CD4-positive, alpha-beta memory T cell (primary cell): ENCODE measurements at regions of chr11 and their contacts with region 1.

Region 1: DNA sequence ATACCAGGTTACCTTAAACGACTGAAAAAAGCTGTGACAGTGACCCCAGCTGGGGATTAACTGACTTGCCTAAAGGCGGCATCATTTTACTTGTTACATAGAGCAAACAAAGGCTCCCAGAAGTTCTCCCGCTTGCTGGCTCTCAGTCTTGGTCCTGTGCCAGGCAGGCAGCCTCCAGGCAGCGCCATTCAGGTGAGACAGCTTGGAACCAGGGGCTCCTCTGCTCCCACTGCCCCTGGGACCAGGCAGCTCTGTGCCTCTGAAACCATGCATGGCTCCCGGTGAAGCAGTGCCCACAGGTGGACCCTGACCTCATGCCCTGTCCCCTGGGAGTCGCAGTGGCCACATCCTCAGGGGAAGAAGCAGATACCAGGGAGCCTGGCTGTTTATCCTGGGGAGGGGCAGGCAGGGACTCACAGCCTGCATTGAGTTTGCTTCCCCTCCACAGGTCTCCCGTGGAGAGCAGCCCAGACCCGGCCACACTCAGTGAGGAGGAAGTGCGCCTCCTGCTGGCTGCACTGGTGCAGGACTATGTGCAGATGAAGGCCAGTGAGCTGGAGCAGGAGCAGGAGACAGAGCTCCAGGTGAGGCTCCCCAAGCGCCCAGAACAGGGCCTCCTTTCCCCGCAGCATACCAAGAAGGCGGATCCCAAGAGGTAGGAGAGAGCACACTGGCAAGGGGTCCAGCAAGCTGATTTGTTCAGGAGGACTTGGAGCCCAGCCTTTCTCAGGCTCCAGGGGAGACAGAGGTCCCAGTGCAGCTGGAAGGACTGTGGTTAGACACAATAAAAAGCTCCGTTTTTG is 15.6 kb upstream of the CYP2R1 start:
- DNase-seq: peak; percentile 74 to 81 (median 76)
- H3K4me3 ChIP-seq: no peak overlapping the region
- H3K4me3 Mint-ChIP-seq: peak overlapping the region in 4 of 8 donors; percentile 21 to 53 (median 40)
- H3K27ac ChIP-seq: no peak overlapping the region
- H3K27ac Mint-ChIP-seq: peak overlapping the region; percentile 6 to 94 (median 69)
- H3K4me1 ChIP-seq: peaks cover 29% of the 10 kb centered on the region
- H3K4me1 Mint-ChIP-seq: peaks cover 22 to 50% (median 34%) of the 10 kb centered on the region in 4 donors
- H3K27me3 ChIP-seq: no peaks in the 10 kb centered on the region
- H3K27me3 Mint-ChIP-seq: no peaks in the 10 kb centered on the region

Region 2: GRCh38 chr11:13772223-13773046 is 1135.2 kb before region 1 on chr11:
- CTCF ChIA-PET with region 1: interaction called, 18 read pairs
- POLR2A ChIA-PET with region 1: no interaction called
- intact Hi-C with region 1: loop called (anchors 2 kb)
- DNase-seq: peak in 4 of 5 donors; percentile 72 to 78 (median 73)
- H3K4me3 ChIP-seq: no peak overlapping the region
- H3K4me3 Mint-ChIP-seq: no peak overlapping the region
- H3K27ac ChIP-seq: no peak overlapping the region
- H3K27ac Mint-ChIP-seq: no peak overlapping the region
- H3K4me1 ChIP-seq: no peaks in the 10 kb centered on the region
- H3K4me1 Mint-ChIP-seq: peaks cover 2 to 6% (median 5%) of the 10 kb centered on the region in 4 donors
- H3K27me3 ChIP-seq: no peaks in the 10 kb centered on the region
- H3K27me3 Mint-ChIP-seq: peaks cover 4% of the 10 kb centered on the region in 2 donors

Region 3: DNA sequence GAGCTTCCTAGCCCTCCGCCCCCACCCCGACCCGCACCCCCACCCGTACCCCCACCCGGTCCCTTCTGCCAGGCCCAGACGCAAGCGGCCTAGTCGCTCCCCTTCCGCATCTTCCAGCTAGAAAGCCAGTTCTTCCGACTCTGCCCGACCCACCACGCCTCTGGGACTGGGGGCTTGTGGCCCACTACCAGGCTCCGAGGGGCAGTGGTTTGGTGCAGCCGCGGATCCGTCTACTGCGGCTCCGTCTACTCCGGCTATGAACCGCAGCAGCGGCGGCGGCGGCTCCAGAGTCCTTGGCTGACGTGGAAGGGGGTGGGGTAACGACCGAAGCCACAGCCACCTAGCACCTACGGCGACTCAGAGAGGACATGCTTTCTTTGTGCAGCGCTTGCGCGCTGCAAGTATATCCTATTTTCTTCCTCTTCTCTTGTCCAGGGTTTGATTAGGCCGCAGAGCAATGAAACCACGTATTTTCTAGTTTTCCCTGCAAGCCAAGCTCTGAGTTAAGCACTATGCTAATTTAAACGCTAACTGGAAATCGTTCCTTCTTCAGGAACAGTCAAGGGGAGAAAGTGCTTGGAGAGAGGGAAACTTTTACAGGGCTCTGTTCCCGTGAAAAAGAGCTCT is 407.9 kb before region 1 on chr11 and contains the start of gene COPB1:
- CTCF ChIA-PET with region 1: interaction called, 5 read pairs
- POLR2A ChIA-PET with region 1: interaction called, 15 read pairs
- intact Hi-C with region 1: loop called (anchors 1 kb)
- DNase-seq: peak; percentile 91 to 95 (median 92)
- H3K4me3 ChIP-seq: peak within 1 kb of the TSS; percentile 76 to 89
- H3K4me3 Mint-ChIP-seq: peak within 1 kb of the TSS; percentile 92 to 100 (median 94)
- H3K27ac ChIP-seq: peak within 1 kb of the TSS; percentile 65
- H3K27ac Mint-ChIP-seq: peak within 1 kb of the TSS; percentile 82 to 100 (median 98)
- H3K4me1 ChIP-seq: peaks cover 49% of the 10 kb centered on the region
- H3K4me1 Mint-ChIP-seq: peaks cover 28 to 57% (median 35%) of the 10 kb centered on the region in 4 donors
- H3K27me3 ChIP-seq: no peaks in the 10 kb centered on the region
- H3K27me3 Mint-ChIP-seq: no peaks in the 10 kb centered on the region
- total RNA-seq, gene COPB1: 79.8 to 82.1 TPM

Region 4: GRCh38 chr11:14566331-14567063 is 341.1 kb before region 1 on chr11:
- CTCF ChIA-PET with region 1: interaction called, 12 read pairs
- POLR2A ChIA-PET with region 1: no interaction called
- intact Hi-C with region 1: no loop called
- DNase-seq: no peak
- H3K4me3 ChIP-seq: no peak overlapping the region
- H3K4me3 Mint-ChIP-seq: peak overlapping the region in 3 of 8 donors; percentile 5 to 56 (median 8)
- H3K27ac ChIP-seq: no peak overlapping the region
- H3K27ac Mint-ChIP-seq: peak overlapping the region in 6 of 7 donors; percentile 37 to 89 (median 66)
- H3K4me1 ChIP-seq: peaks cover 54% of the 10 kb centered on the region
- H3K4me1 Mint-ChIP-seq: peaks cover 40 to 72% (median 56%) of the 10 kb centered on the region in 4 donors
- H3K27me3 ChIP-seq: no peaks in the 10 kb centered on the region
- H3K27me3 Mint-ChIP-seq: no peaks in the 10 kb centered on the region

Region 5: DNA sequence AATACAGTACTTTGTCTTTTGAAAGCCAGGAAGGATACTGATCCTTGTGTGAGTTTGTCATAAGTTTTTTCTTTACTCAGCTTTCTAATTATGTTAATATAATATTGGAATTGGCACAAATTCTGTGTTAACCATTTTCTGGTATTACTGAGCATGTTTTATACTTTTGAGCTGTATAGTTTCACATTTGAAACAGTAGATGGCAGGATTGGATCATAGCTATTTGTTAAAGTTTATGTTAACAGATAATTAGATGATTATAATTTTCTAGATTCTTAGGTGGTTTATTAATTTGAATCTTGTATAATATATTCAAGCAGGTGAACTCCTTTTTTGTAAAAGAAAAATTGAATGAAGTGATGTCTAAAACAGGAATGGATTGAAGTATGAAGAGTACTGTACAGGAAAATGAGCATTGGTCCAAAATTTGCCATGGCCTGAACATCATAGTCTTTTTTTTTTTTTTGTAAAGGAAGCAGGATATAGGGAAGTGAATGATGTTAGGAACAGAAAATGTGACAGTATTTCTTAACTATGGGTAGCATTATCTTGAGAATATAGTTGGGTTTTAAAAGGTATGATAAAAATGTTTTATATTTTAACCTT is 117.6 kb before region 1 on chr11:
- CTCF ChIA-PET with region 1: interaction called, 86 read pairs
- POLR2A ChIA-PET with region 1: interaction called, 12 read pairs
- intact Hi-C with region 1: loop called (anchors 1 kb)
- DNase-seq: peak in 4 of 5 donors; percentile 9 to 22 (median 17)
- H3K4me3 ChIP-seq: no peak overlapping the region
- H3K4me3 Mint-ChIP-seq: no peak overlapping the region
- H3K27ac ChIP-seq: no peak overlapping the region
- H3K27ac Mint-ChIP-seq: peak overlapping the region in 4 of 7 donors; percentile 30 to 57 (median 45)
- H3K4me1 ChIP-seq: no peaks in the 10 kb centered on the region
- H3K4me1 Mint-ChIP-seq: peaks cover 0 to 4% (median 2%) of the 10 kb centered on the region in 4 donors
- H3K27me3 ChIP-seq: no peaks in the 10 kb centered on the region
- H3K27me3 Mint-ChIP-seq: no peaks in the 10 kb centered on the region

Region 6: GRCh38 chr11:14934641-14935351 is 27.2 kb after region 1 on chr11:
- CTCF ChIA-PET with region 1: interaction called, 19 read pairs
- POLR2A ChIA-PET with region 1: no interaction called
- intact Hi-C with region 1: no loop called
- DNase-seq: no peak
- H3K4me3 ChIP-seq: no peak overlapping the region
- H3K4me3 Mint-ChIP-seq: no peak overlapping the region
- H3K27ac ChIP-seq: no peak overlapping the region
- H3K27ac Mint-ChIP-seq: no peak overlapping the region
- H3K4me1 ChIP-seq: no peaks in the 10 kb centered on the region
- H3K4me1 Mint-ChIP-seq: no peaks in the 10 kb centered on the region
- H3K27me3 ChIP-seq: no peaks in the 10 kb centered on the region
- H3K27me3 Mint-ChIP-seq: peaks cover 1 to 2% of the 10 kb centered on the region in 2 donors

Region 7: DNA sequence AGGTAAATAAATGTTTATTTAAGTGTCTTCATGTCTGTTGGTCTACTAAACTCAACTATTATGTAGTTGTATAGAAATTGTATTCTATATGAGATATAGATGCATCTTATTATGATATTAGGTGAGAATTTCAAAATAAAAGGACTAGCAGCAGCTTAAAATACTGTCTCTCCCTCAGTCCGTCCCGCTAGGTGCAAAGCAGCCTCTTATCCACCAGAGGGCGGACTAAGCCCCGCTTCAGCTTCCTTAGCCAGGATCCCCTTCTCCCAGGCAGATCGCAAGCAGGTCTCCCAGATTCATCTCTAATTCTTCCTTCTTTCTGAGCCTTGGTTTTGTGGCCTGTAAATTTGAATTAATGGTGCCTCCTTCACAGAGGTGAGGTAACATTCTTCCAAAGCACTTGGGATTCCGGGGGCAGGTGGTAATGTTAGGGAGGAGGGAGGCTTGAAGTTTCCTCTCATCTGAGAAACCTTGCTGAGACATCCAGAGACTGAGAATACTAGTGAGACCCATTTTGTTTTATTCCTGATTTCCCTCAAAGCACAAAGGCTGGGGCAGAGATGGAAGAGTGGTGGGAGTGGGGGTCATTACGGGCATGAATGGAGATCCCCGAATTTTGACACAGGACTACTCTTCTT is 193.6 kb after region 1 on chr11:
- CTCF ChIA-PET with region 1: interaction called, 24 read pairs
- POLR2A ChIA-PET with region 1: no interaction called
- intact Hi-C with region 1: no loop called
- DNase-seq: peak in 4 of 5 donors; percentile 19 to 22 (median 21)
- H3K4me3 ChIP-seq: no peak overlapping the region
- H3K4me3 Mint-ChIP-seq: peak overlapping the region in 1 of 8 donors; percentile 27
- H3K27ac ChIP-seq: no peak overlapping the region
- H3K27ac Mint-ChIP-seq: no peak overlapping the region
- H3K4me1 ChIP-seq: no peaks in the 10 kb centered on the region
- H3K4me1 Mint-ChIP-seq: peaks cover 0 to 3% (median under 1%) of the 10 kb centered on the region in 4 donors
- H3K27me3 ChIP-seq: no peaks in the 10 kb centered on the region
- H3K27me3 Mint-ChIP-seq: peaks cover 4 to 7% of the 10 kb centered on the region in 2 donors

Region 8: GRCh38 chr11:15551901-15552851 is 644.6 kb after region 1 on chr11:
- CTCF ChIA-PET with region 1: no interaction called
- POLR2A ChIA-PET with region 1: no interaction called
- intact Hi-C with region 1: no loop called
- DNase-seq: no peak
- H3K4me3 ChIP-seq: no peak overlapping the region
- H3K4me3 Mint-ChIP-seq: no peak overlapping the region
- H3K27ac ChIP-seq: no peak overlapping the region
- H3K27ac Mint-ChIP-seq: no peak overlapping the region
- H3K4me1 ChIP-seq: no peaks in the 10 kb centered on the region
- H3K4me1 Mint-ChIP-seq: no peaks in the 10 kb centered on the region
- H3K27me3 ChIP-seq: no peaks in the 10 kb centered on the region
- H3K27me3 Mint-ChIP-seq: no peaks in the 10 kb centered on the region